Activated naive CD8-positive, alpha-beta T cell treated with anti-CD3 and anti-CD28 coated beads, Interleukin-2, amount 10 ng/mL, durations not matched to agents 7 days and 5 days (primary cell): ENCODE measurements at regions of chr7 and their contacts with region 1.

Region 1: DNA sequence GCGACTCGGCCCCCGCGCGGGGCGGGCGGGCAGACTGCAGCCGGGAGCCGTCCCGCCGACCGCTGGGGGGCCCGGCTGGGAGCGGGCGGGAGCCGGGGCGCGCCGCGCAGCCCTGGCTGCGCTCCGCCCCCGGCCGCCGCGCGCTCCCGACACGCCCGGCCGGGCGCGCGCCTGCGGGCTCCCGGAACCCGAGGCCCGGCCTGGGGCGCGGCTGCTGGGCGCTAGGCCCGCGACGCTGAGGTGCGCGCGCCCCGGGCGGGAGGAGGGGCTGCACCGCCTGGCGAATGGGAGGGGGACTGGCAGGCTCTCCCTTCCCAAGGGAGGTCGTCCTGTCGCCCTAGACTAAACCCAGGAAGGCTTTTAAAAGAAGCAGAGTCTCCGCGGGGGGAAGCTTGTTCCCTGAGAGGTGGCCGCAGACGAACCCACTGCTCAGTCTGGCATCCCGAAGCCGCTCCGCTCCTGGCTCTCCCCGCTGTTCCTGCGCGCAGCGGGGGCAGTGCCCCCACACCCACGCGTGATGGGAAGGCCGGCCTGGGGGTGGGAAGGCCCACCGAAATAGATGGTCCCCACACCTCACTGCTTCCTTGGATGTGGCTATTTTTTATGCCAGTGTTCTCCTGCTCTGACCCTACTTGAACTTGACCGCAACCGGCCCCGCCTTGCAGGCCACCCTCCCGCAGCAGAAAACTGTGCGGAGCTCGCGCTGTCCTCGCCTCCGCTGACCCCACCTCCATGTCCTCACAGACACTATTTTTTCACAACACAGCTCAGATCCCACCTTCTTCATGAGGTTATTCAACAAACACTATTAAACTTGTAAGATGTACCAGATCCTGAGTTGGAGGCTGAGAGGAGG is at the start of gene VOPP1:
- DNase-seq: peak; percentile 85
- ATAC-seq: peak; percentile 69
- H3K4me3 Mint-ChIP-seq: peak within 1 kb of the TSS; percentile 89
- H3K27ac Mint-ChIP-seq: peak within 1 kb of the TSS; percentile 90
- H3K4me1 Mint-ChIP-seq: peaks cover 49% of the 10 kb centered on the region
- H3K27me3 Mint-ChIP-seq: no peaks in the 10 kb centered on the region
- total RNA-seq, gene VOPP1: 50.0 to 50.1 TPM

Region 2: GRCh38 chr7:55534175-55534915 is 38.3 kb before region 1 on chr7:
- POLR2A ChIA-PET with region 1: interaction called, 47 read pairs
- DNase-seq: peak; percentile 53
- ATAC-seq: peak; percentile 75
- H3K4me3 Mint-ChIP-seq: peak overlapping the region; percentile 80
- H3K27ac Mint-ChIP-seq: peak overlapping the region; percentile 93
- H3K4me1 Mint-ChIP-seq: peaks cover 66% of the 10 kb centered on the region
- H3K27me3 Mint-ChIP-seq: no peaks in the 10 kb centered on the region

Region 3: DNA sequence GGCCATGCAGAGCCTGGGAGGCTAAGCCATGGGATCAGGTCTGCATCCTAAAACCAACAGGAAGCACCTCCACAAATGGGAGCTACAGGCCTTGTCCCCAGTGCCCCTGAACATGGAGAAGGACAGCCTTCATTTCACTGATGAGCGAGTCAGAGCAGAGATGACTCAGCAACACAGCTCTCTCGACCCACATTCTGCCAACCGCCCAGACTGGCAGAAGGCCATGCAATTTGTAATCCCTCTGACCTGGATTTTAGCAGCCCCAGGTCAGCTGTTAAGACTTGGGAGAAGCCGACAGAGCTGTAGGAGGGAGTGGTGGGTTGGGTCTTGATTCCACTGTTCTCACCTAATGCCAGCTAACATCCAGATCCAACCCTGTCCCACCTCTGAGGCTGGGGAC is 25.8 kb before region 1 on chr7:
- POLR2A ChIA-PET with region 1: no interaction called
- DNase-seq: no peak
- ATAC-seq: no peak
- H3K4me3 Mint-ChIP-seq: no peak overlapping the region
- H3K27ac Mint-ChIP-seq: no peak overlapping the region
- H3K4me1 Mint-ChIP-seq: peaks cover 8% of the 10 kb centered on the region
- H3K27me3 Mint-ChIP-seq: no peaks in the 10 kb centered on the region